Psoas muscle (tissue), 8 donors: ENCODE measurements at regions of chr1 and their contacts with region 1.

Region 1: GRCh38 chr1:25819576-25820246 is at the start of gene MTFR1L:
- DNase-seq: peak; percentile 87 to 92
- ATAC-seq: peak; percentile 86 to 93 (median 89)
- H3K4me3 ChIP-seq: peak within 1 kb of the TSS; percentile 73
- H3K27ac ChIP-seq: peak within 1 kb of the TSS; percentile 92
- H3K4me1 ChIP-seq: peaks cover 31% of the 10 kb centered on the region
- H3K27me3 ChIP-seq: no peaks in the 10 kb centered on the region
- CTCF ChIP-seq: no peak
- total RNA-seq, gene MTFR1L: 85.2 to 112 (median 94.1) TPM

Region 2: DNA sequence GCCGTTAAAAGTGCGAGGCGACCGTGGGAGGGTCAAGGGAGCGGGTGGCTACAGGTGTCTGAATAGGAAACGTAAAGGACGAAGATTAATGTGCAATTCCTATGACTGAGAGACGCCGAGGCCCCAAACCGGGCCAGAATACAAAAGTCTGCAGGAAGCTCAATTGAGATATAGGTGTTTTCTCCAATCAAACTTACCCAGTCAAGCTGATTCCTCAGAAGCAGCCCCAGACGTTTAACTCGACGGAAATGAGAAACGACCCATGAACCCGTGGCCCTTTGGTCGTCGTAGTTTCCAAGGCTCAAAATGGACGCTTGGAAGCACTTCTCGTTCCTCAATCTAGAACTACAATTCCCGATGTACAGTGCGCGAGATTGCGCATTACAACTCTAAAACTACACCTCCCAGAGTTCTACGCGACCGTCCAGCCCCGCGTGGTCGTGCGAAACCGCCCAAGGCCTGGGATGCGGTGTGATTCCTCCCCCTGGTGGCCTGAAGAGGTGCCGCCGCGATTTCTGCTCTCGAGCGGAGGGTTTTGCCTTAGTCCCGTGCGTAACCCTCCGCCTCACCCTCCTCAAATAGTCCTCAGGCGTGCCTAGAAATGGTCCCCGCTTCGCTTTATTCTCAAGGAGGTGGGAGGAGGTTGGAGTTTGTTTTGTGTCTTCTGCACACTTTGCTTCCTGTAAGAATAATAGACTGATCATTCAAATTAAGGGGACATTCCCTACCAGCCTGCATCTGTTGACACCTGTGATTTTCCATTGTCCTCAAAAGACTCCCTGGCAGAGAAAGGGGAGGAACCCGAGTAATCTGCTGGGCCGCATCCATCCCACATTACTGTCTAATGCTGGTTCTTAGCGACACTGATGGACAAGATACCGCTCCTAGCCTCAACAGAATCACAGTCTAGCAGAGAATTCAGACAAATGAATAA is 178.4 kb after region 1 on chr1 and contains the start of gene PAFAH2:
- intact Hi-C with region 1: loop called in 1 of 2 experiments (anchors 10 kb)
- DNase-seq: peak; percentile 96 to 99
- ATAC-seq: peak; percentile 95 to 98 (median 96)
- H3K4me3 ChIP-seq: peak within 1 kb of the TSS; percentile 73
- H3K27ac ChIP-seq: peak within 1 kb of the TSS; percentile 86
- H3K4me1 ChIP-seq: peaks cover 34% of the 10 kb centered on the region
- H3K27me3 ChIP-seq: no peaks in the 10 kb centered on the region
- CTCF ChIP-seq: peak; percentile 97
- total RNA-seq, gene PAFAH2: 5.5 to 15.8 (median 13.3) TPM